ENCODE measurements at regions of chr13 and their contacts with region 1.

Region 1: GRCh38 chr13:19863323-19864023 is at the start of gene ZMYM5:
- DNase-seq: peak; percentile 95
- ATAC-seq: peak; percentile 91
- H3K4me3 ChIP-seq: peak within 1 kb of the TSS; percentile 82
- H3K27ac ChIP-seq: peak within 1 kb of the TSS; percentile 99
- H3K4me1 ChIP-seq: peaks cover 20% of the 10 kb centered on the region
- H3K27me3 ChIP-seq: no peaks in the 10 kb centered on the region
- CTCF ChIP-seq: no peak
- EP300 ChIP-seq: no peak
- POLR2A ChIP-seq: peak; percentile 83
- RAD21 ChIP-seq: no peak
- polyA plus RNA-seq, gene ZMYM5: 7.7 to 9.4 TPM

Region 2: GRCh38 chr13:19633479-19634255 is 229.8 kb before region 1 on chr13 and contains the start of gene MPHOSPH8:
- CTCF ChIA-PET with region 1: no interaction called
- POLR2A ChIA-PET with region 1: no interaction called
- RAD21 ChIA-PET with region 1: no interaction called
- SMC1A ChIA-PET with region 1: interaction called, 3 read pairs
- in situ Hi-C with region 1: no loop called
- intact Hi-C with region 1: loop called (anchors 10 kb)
- DNase-seq: peak; percentile 84
- ATAC-seq: peak; percentile 98
- H3K4me3 ChIP-seq: peak within 1 kb of the TSS; percentile 97
- H3K27ac ChIP-seq: peak within 1 kb of the TSS; percentile 86
- H3K4me1 ChIP-seq: no peaks in the 10 kb centered on the region
- H3K27me3 ChIP-seq: no peaks in the 10 kb centered on the region
- CTCF ChIP-seq: no peak
- EP300 ChIP-seq: no peak
- POLR2A ChIP-seq: peak; percentile 83
- RAD21 ChIP-seq: no peak
- polyA plus RNA-seq, gene MPHOSPH8: 16.6 to 29.3 TPM

Region 3: DNA sequence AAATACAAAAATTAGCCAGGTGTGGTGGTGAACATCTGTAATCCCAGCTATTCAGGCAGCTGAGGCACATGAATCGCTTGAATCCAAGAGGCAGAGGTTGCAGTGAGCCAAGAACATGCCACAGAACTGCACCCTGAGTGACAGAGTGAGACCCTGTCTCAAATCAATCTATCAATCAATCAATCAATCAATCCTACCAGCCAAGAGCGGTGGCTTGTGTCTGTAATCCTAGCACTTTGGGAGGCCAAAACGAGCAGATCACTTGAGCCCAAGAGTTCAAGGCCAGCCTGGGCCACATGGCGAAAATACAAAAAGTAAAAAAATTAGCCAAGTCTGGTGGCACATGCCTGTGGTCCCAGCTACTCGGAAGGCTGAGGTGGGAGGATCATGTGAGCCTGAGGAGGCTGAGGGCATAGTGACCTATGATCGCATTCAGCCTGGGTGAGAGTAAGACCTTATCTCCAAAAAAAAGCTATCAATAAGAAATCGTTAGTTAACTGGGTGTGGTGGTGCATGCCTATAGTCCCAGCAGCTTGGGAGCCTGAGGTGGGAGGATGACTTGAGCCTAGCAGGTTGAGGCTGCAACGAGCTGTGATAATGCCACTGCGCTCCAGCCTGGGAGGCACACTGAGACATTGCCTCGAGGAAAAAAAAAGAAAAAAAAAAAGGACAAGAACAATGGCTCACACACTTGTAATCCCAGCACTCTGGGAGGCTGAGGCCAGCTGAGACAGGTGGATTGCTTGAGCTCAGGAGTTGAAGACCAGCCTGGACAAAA is 97.1 kb before region 1 on chr13:
- CTCF ChIA-PET with region 1: no interaction called
- POLR2A ChIA-PET with region 1: interaction called, 3 read pairs
- RAD21 ChIA-PET with region 1: no interaction called
- SMC1A ChIA-PET with region 1: no interaction called
- in situ Hi-C with region 1: no loop called
- intact Hi-C with region 1: loop called (anchors 5 kb)
- DNase-seq: no peak
- ATAC-seq: no peak; the same call in 2 of the 3 replicates
- H3K4me3 ChIP-seq: no peak overlapping the region
- H3K27ac ChIP-seq: no peak overlapping the region
- H3K4me1 ChIP-seq: no peaks in the 10 kb centered on the region
- H3K27me3 ChIP-seq: no peaks in the 10 kb centered on the region
- CTCF ChIP-seq: no peak
- EP300 ChIP-seq: no peak
- POLR2A ChIP-seq: no peak
- RAD21 ChIP-seq: no peak

Region 4: GRCh38 chr13:19782049-19782726 is 81.3 kb before region 1 on chr13:
- CTCF ChIA-PET with region 1: no interaction called
- POLR2A ChIA-PET with region 1: interaction called, 4 read pairs
- RAD21 ChIA-PET with region 1: interaction called, 6 read pairs
- SMC1A ChIA-PET with region 1: interaction called, 4 read pairs
- in situ Hi-C with region 1: no loop called
- intact Hi-C with region 1: loop called (anchors 1 kb)
- DNase-seq: no peak
- ATAC-seq: peak; percentile 75
- H3K4me3 ChIP-seq: peak overlapping the region; percentile 97
- H3K27ac ChIP-seq: peak overlapping the region; percentile 92
- H3K4me1 ChIP-seq: no peaks in the 10 kb centered on the region
- H3K27me3 ChIP-seq: no peaks in the 10 kb centered on the region
- CTCF ChIP-seq: no peak
- EP300 ChIP-seq: no peak
- POLR2A ChIP-seq: peak; percentile 62; the same call in 1 of the 2 replicates
- RAD21 ChIP-seq: no peak

Region 5: GRCh38 chr13:19852766-19853165 is 10.7 kb before region 1 on chr13:
- CTCF ChIA-PET with region 1: interaction called, 10 read pairs
- POLR2A ChIA-PET with region 1: interaction called, 8 read pairs
- RAD21 ChIA-PET with region 1: interaction called, 3 read pairs
- SMC1A ChIA-PET with region 1: interaction called, 4 read pairs
- in situ Hi-C with region 1: no loop called
- intact Hi-C with region 1: no loop called
- DNase-seq: no peak
- ATAC-seq: no peak
- H3K4me3 ChIP-seq: no peak overlapping the region
- H3K27ac ChIP-seq: no peak overlapping the region
- H3K4me1 ChIP-seq: no peaks in the 10 kb centered on the region
- H3K27me3 ChIP-seq: no peaks in the 10 kb centered on the region
- CTCF ChIP-seq: no peak
- EP300 ChIP-seq: no peak
- POLR2A ChIP-seq: no peak
- RAD21 ChIP-seq: no peak

Region 6: DNA sequence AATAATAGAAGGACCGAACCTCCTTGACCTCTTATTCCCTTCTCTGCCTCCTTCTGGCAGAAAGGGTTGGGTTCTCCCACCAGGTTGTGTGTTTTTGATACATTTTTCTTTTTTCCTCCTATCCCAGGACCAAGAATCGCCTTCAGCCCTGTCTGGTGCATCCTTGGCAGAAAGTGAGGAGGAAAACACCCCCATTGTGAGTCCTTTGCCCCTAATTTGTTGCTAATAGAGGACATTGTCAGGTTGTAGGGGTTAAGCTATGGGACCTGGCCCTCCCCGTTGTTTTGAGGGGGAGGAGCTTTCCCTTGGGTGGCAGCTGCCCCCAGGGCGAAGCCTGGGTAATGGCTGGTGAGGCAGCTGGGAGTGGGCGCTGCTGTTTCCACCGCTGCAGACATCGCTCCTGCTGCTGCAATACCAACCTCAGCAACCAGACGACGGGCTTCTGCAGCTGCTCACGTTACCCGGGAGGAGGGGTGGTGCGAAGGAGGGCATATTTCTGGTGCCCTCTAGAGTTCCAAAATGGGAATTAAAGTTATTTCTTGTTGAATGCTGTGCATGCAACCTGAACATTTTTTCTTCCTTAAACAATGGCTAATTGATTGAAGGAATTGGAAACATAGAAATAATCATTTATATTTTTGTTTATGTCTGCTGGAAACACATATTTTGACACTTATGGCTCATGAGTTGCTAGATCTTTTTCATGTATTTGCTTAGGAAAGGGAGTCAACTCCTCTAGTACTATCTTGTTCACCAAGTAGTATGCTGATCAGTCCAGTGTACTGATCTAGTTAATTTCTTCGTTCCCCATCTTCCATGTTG is 96.6 kb after region 1 on chr13:
- CTCF ChIA-PET with region 1: interaction called, 7 read pairs
- POLR2A ChIA-PET with region 1: interaction called, 4 read pairs
- RAD21 ChIA-PET with region 1: no interaction called
- SMC1A ChIA-PET with region 1: no interaction called
- in situ Hi-C with region 1: no loop called
- intact Hi-C with region 1: loop called (anchors 2 kb)
- DNase-seq: peak; percentile 68
- ATAC-seq: peak; percentile 65
- H3K4me3 ChIP-seq: peak overlapping the region; percentile 81
- H3K27ac ChIP-seq: peak overlapping the region; percentile 80
- H3K4me1 ChIP-seq: no peaks in the 10 kb centered on the region
- H3K27me3 ChIP-seq: no peaks in the 10 kb centered on the region
- CTCF ChIP-seq: peak; percentile 89 to 92 (median 90)
- EP300 ChIP-seq: no peak; a peak in 1 of 4 replicates
- POLR2A ChIP-seq: peak; percentile 70
- RAD21 ChIP-seq: peak; percentile 53

Region 7: GRCh38 chr13:20969182-20969581 is 1105.7 kb after region 1 on chr13:
- CTCF ChIA-PET with region 1: no interaction called
- POLR2A ChIA-PET with region 1: no interaction called
- RAD21 ChIA-PET with region 1: no interaction called
- SMC1A ChIA-PET with region 1: no interaction called
- in situ Hi-C with region 1: no loop called
- intact Hi-C with region 1: no loop called
- DNase-seq: peak; percentile 15
- ATAC-seq: peak; percentile 78
- H3K4me3 ChIP-seq: no peak overlapping the region
- H3K27ac ChIP-seq: no peak overlapping the region
- H3K4me1 ChIP-seq: no peaks in the 10 kb centered on the region
- H3K27me3 ChIP-seq: no peaks in the 10 kb centered on the region
- CTCF ChIP-seq: no peak
- EP300 ChIP-seq: no peak
- POLR2A ChIP-seq: no peak
- RAD21 ChIP-seq: no peak

Measured in GM12878 (cell line).